ENCODE measurements at regions of chr15 and their contacts with region 1.

Region 1: DNA sequence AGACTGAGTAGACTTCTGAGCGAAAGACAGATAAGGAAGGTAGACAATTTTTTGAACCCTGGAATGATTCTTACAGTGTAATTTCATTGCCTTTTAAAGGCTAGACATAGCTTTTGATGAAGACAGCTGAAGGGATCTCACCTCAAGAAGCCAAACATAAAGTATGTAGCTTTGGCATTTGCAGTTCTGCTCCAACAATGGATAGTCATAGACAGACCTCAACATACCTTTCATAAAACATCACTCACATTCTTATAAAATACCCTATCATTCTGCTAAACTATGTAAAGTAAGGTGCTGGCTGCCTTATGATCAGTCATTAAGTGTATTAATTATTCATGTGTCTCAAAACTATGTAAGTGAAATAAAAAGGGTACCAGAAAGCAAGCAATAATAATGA is 70.0 kb downstream of the UBE3A start:
- DNase-seq: no peak
- H3K4me3 ChIP-seq: no peak overlapping the region
- H3K27ac ChIP-seq: no peak overlapping the region
- H3K4me1 ChIP-seq: no peaks in the 10 kb centered on the region
- CTCF ChIP-seq: no peak

Region 2: DNA sequence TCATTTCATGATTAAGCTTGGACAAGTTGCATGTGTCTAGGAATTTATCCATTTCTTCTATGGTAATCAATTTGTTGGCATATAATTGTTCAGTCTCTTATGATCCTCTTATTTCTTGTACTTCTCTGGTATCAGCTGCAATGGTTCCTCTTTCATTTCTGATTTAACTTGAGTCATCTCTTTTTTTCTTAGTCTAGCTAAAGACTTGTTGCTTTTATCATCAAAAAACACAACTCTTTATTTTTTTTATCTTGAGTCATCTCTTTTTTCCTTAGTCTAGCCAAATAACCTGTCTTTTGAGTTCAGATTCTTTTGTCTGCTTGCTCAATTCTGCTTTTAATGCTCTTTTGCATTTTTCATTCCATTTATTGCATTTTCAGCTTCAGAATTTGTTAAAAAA is 32.7 kb after region 1 on chr15:
- CTCF ChIA-PET with region 1: interaction called, 3 read pairs
- POLR2A ChIA-PET with region 1: no interaction called
- intact Hi-C with region 1: loop called (anchors 5 kb)
- DNase-seq: no peak
- H3K4me3 ChIP-seq: no peak overlapping the region
- H3K27ac ChIP-seq: no peak overlapping the region
- H3K4me1 ChIP-seq: peaks cover 21% of the 10 kb centered on the region
- CTCF ChIP-seq: no peak